MCF 10A (cell line): ENCODE measurements at regions of chr2 and their contacts with region 1.

Region 1: GRCh38 chr2:7097348-7097895 is 180.2 kb downstream of the RNF144A start:
- DNase-seq: peak; percentile 76
- H3K4me3 Mint-ChIP-seq: peak overlapping the region; percentile 59
- H3K27ac Mint-ChIP-seq: peak overlapping the region; percentile 2
- H3K4me1 Mint-ChIP-seq: peaks cover 7% of the 10 kb centered on the region
- H3K27me3 Mint-ChIP-seq: peaks cover 24% of the 10 kb centered on the region
- CTCF ChIP-seq: peak; percentile 97

Region 2: DNA sequence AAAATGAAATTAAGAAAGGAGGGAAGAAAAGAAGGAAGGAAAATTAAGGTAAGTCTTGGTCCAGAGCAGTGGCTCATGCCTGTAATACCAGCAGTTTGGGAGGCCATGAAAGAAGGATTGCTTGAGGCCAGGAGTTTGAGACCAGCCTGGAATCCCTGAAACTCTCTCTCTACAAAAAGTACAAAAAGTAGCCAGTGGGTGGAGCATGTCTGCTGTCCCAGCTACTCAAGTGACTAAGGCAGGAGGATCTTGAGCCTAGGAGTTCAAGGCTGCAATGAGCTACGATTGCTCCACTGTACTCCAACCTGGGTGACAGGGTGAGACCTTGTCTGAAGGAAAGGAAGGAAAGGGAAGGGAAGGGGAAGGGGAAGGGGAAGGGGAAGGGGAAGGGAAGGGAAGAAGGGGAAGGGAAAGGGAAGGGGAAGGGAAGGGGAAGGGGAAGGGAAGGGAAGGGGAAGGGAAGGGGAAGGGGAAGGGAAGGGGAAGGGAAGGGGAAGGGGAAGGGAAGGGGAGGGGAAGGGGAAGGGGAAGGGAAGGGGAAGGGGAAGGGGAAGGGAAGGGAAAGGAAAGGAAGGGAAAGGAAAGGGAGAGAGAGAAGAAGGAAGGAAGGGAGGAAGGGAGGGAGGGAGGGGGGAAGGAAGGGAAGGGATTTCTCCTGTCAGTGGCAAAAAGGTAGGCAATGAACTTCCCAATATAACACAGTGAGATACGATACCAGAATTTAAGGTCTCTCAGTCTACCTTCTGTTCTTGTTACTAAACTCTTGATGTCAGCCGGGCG is 644.5 kb before region 1 on chr2:
- CTCF ChIA-PET with region 1: no interaction called
- POLR2A ChIA-PET with region 1: no interaction called
- intact Hi-C with region 1: no loop called
- DNase-seq: peak; percentile 45
- H3K4me3 Mint-ChIP-seq: no peak overlapping the region
- H3K27ac Mint-ChIP-seq: no peak overlapping the region
- H3K4me1 Mint-ChIP-seq: no peaks in the 10 kb centered on the region
- H3K27me3 Mint-ChIP-seq: no peaks in the 10 kb centered on the region
- CTCF ChIP-seq: no peak

Region 3: DNA sequence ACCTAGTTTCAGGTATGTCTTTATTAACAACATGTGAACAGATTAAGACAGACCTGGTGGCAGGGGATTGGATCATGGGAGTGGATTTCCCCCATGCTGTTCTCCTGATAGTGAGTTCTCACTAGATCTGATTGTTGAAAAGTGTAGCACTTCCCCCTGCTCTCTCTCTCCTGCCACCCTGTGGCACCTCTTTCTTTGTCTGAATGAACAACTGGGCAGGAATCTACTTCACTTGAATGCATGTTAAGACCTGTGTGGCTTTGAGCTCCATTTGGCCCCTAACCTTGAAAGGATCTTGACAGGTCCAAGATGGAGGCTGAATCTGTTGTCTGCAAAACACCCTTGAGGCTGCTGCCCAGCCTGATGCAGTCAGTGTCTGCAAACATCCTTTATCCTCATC is 14.2 kb after region 1 on chr2:
- CTCF ChIA-PET with region 1: interaction called, 86 read pairs
- POLR2A ChIA-PET with region 1: no interaction called
- intact Hi-C with region 1: no loop called
- DNase-seq: peak; percentile 36
- H3K4me3 Mint-ChIP-seq: no peak overlapping the region
- H3K27ac Mint-ChIP-seq: no peak overlapping the region
- H3K4me1 Mint-ChIP-seq: no peaks in the 10 kb centered on the region
- H3K27me3 Mint-ChIP-seq: peaks cover 32% of the 10 kb centered on the region
- CTCF ChIP-seq: no peak

Region 4: GRCh38 chr2:7118606-7119503 is 21.4 kb after region 1 on chr2:
- CTCF ChIA-PET with region 1: interaction called, 86 read pairs
- POLR2A ChIA-PET with region 1: no interaction called
- intact Hi-C with region 1: no loop called
- DNase-seq: peak; percentile 40
- H3K4me3 Mint-ChIP-seq: no peak overlapping the region
- H3K27ac Mint-ChIP-seq: no peak overlapping the region
- H3K4me1 Mint-ChIP-seq: no peaks in the 10 kb centered on the region
- H3K27me3 Mint-ChIP-seq: peaks cover 41% of the 10 kb centered on the region
- CTCF ChIP-seq: peak; percentile 38

Region 5: DNA sequence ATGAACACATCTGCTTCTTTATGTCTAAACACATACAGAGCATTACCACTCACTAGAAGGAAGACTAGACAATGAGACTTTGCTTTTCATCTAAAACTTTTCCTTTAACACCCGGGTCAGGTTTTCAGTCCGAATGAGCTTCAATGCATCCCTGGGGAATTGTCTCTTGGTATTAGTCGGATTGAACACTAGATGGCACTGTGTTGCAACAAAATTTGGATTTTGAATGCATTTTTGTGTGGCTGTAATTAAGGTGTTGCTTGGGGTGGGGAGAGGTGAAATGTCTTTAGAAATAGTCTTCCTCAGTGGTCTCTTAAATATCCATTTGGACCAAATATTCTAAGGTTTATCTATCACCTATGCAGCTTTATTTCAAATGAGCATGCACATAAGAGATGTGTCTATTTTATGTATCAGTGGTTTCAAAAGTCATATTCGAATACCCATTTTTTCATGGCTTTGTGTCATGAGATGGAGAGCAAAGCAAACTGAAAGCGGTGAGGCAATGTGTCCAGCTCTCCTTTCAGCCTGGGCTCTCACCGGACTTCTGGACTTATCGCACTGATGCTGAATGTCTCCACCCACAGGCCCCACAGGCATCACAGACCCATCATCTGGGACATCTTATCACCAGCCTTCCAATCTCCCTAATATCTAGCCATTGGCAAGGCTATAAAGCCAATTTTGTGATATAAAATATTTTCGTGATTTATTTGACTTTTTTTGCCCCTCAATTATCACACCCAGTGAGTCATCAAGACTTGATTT is 330.1 kb after region 1 on chr2:
- CTCF ChIA-PET with region 1: interaction called, 10 read pairs
- POLR2A ChIA-PET with region 1: no interaction called
- intact Hi-C with region 1: no loop called
- DNase-seq: peak; percentile 70
- H3K4me3 Mint-ChIP-seq: no peak overlapping the region
- H3K27ac Mint-ChIP-seq: no peak overlapping the region
- H3K4me1 Mint-ChIP-seq: no peaks in the 10 kb centered on the region
- H3K27me3 Mint-ChIP-seq: peaks cover 31% of the 10 kb centered on the region
- CTCF ChIP-seq: peak; percentile 70

Region 6: GRCh38 chr2:8681786-8682692 is 1584.6 kb after region 1 on chr2 and contains the start of gene ID2:
- CTCF ChIA-PET with region 1: interaction called, 7 read pairs
- POLR2A ChIA-PET with region 1: no interaction called
- intact Hi-C with region 1: loop called (anchors 1 kb)
- DNase-seq: peak; percentile 99
- H3K4me3 Mint-ChIP-seq: peak within 1 kb of the TSS; percentile 75
- H3K27ac Mint-ChIP-seq: no peak within 1 kb of the TSS
- H3K4me1 Mint-ChIP-seq: peaks cover 28% of the 10 kb centered on the region
- H3K27me3 Mint-ChIP-seq: peaks cover under 1% of the 10 kb centered on the region
- CTCF ChIP-seq: no peak
- total RNA-seq, gene ID2: 0.54 and 2.0 TPM in 2 replicates

Region 7: DNA sequence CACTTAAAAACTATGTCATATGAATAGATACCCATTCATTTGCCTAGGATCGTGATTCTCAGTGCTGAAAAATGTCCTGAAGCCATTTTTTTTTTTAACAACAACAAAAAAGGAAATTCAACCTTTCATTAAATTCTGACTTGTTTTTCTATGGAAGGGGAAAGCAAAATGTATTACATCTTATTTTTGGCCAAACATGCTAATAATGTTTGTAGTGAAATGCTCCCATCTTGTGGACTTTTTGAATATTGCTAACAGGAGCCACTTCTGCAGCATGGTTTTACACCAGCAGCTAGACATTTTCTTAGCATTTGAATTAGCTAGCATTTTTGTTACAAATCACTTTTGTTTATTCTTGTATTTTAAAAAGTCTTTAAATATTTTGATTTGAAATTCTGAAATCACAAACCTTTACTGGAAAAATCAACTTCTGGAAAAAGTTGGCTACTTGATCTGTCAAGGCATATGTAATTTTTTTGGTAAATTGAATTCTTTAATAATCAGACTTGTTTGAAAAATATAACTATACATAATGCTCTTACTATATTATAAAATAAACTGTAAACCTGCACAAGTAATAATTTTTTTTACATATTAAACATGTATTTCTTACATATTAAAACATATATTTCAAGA is 1664.2 kb after region 1 on chr2:
- CTCF ChIA-PET with region 1: interaction called, 8 read pairs
- POLR2A ChIA-PET with region 1: no interaction called
- intact Hi-C with region 1: loop called (anchors 1 kb)
- DNase-seq: peak; percentile 47
- H3K4me3 Mint-ChIP-seq: no peak overlapping the region
- H3K27ac Mint-ChIP-seq: no peak overlapping the region
- H3K4me1 Mint-ChIP-seq: no peaks in the 10 kb centered on the region
- H3K27me3 Mint-ChIP-seq: no peaks in the 10 kb centered on the region
- CTCF ChIP-seq: peak; percentile 41